A673 (cell line): ENCODE measurements at regions of chr20 and their contacts with region 1.

Region 1: DNA sequence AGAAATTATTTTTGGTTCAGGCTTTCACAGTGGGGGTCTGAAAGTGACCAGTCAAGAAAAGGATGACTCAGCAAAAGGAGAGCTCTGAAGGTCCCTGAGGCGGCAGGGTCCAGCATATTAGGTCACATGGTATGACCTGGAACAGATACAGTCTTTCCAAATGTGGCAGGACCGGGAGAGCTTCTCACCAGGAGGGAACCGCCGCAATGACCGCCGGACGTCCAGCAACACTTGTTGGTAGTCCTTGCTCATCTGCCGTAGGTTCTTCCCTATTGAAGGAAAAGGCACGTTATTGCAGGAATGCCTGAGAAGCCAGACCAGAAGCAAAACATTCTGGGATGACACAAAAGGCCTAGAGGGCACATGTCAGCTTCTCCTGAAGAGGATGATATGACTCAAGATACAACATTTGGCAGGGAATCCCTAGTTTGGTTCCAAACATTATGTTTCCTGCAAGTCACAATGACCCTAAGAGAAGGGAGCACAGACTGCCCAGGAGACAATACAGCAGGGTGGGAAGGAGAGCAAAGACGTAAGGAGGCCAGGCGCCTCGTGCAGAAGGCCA is 17.4 kb downstream of the TBC1D20 start:
- DNase-seq: no peak
- H3K4me3 ChIP-seq: no peak overlapping the region
- H3K27ac ChIP-seq: peak overlapping the region; percentile 9
- H3K4me1 ChIP-seq: no peaks in the 10 kb centered on the region
- H3K27me3 ChIP-seq: no peaks in the 10 kb centered on the region
- CTCF ChIP-seq: no peak

Region 2: DNA sequence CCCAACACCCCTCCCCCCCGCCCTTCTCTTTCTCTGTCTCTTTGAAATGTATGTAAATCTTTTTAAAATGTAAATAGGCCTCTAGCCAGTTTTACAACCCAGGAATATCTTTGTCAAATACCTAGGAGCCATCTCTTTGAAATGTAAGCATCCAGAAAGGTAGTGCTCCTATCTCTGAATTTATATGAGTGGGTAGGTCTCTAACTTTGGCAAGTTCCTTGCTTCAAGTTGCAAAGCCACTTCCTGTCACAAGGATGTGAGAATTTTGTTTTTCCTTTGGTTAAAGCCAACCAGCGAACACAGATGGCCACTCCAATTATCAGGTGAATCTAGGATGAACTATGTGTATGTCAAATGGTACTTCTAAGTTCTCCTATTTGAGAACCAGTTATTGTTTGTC is 193.6 kb before region 1 on chr20:
- CTCF ChIA-PET with region 1: no interaction called
- POLR2A ChIA-PET with region 1: interaction called, 11 read pairs
- intact Hi-C with region 1: no loop called
- DNase-seq: no peak
- H3K4me3 ChIP-seq: no peak overlapping the region
- H3K27ac ChIP-seq: no peak overlapping the region
- H3K4me1 ChIP-seq: peaks cover 10% of the 10 kb centered on the region
- H3K27me3 ChIP-seq: no peaks in the 10 kb centered on the region
- CTCF ChIP-seq: no peak